ENCODE measurements at regions of chr10 and their contacts with region 1.

Region 1: DNA sequence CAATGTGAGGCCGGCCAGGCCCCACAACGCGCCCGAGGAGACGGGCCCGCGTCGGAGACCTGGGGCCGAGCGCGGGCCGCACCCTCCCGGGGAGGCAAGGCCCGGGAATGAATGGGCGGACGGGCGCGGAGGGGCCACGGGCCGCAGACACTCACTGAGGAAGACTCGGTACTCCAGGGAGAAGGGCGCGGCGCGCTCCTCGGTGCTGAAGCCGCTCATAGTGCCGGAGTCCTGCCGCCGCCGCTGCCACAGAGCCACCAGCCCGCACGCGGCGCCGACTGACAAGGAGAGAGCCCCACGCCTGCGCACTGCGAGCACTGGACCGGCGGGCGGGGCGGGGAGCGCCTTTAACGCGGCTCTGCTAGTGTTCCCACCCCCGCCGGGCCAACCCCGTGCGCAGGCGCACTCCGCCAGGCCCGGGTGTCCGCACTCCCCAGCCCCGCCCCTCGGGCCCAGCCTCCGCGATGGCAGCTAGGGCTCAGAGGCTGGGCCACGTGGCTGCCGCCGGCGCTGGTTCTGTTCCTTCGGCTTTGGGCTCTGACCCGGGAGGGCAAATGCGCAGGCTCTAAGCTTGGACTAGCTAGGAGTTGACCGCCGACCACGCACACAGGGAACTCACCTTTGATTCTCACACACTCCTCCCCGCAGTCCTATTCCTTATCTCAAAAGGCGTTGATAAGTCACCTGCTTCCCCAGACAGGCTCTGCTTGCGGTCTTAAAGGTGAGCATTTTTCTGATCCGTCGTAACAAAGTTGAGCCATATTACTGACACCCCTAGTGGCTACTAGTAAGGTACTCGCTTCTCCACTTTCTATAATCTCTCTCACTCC is at the start of gene PPA1:
- DNase-seq: peak; percentile 100
- ATAC-seq: peak; percentile 91
- H3K4me3 Mint-ChIP-seq: peak within 1 kb of the TSS; percentile 83
- H3K27ac Mint-ChIP-seq: peak within 1 kb of the TSS; percentile 89
- H3K4me1 Mint-ChIP-seq: peaks cover 31% of the 10 kb centered on the region
- H3K27me3 Mint-ChIP-seq: no peaks in the 10 kb centered on the region
- total RNA-seq, gene PPA1: 286 to 328 TPM

Region 2: DNA sequence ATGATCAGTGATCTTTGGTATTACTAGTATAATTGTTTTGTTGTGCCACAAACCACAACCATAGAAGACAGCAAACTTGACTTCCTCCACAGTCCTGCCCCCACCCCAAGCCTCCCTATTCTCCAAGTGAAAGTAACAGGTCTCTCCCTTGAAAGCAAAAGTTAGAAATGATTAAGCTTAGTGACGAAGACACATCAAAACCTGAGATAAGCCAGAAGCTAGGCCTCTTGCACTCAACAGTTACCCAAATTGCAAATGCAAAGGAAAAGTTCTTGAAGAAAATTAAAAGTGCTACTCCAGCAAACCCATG is 70.5 kb before region 1 on chr10:
- CTCF ChIA-PET with region 1: no interaction called
- POLR2A ChIA-PET with region 1: interaction called, 3 read pairs
- intact Hi-C with region 1: loop called in 1 of 2 experiments (anchors 1 kb)
- DNase-seq: peak; percentile 84
- ATAC-seq: peak; percentile 87
- H3K4me3 Mint-ChIP-seq: peak overlapping the region; percentile 60
- H3K27ac Mint-ChIP-seq: peak overlapping the region; percentile 90
- H3K4me1 Mint-ChIP-seq: peaks cover 74% of the 10 kb centered on the region
- H3K27me3 Mint-ChIP-seq: no peaks in the 10 kb centered on the region

Region 3: DNA sequence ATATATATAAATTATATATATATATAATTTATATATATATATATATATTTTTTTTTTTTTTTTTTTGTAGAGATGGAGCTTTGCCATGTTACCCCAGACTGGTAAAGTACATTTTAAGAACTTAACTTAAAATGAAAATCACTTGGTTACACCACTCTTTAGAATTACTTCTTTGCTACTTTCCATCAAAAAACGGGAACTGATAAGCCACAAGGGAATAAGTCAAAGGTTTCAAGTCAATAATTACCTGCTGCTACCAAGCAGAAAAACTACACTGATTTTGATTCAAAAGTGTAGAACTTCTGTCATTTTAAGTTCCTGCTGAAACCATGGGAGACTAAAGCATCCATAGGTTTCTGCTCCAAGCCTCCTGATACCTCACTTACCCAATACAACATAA is 12.3 kb before region 1 on chr10:
- CTCF ChIA-PET with region 1: interaction called, 69 read pairs
- POLR2A ChIA-PET with region 1: interaction called, 4 read pairs
- intact Hi-C with region 1: loop called in 1 of 2 experiments (anchors 1 kb)
- DNase-seq: no peak
- ATAC-seq: no peak
- H3K4me3 Mint-ChIP-seq: no peak overlapping the region
- H3K27ac Mint-ChIP-seq: no peak overlapping the region
- H3K4me1 Mint-ChIP-seq: peaks cover 36% of the 10 kb centered on the region
- H3K27me3 Mint-ChIP-seq: no peaks in the 10 kb centered on the region

Region 4: GRCh38 chr10:70272925-70273316 is 39.6 kb after region 1 on chr10:
- CTCF ChIA-PET with region 1: interaction called, 8 read pairs
- POLR2A ChIA-PET with region 1: interaction called, 7 read pairs
- intact Hi-C with region 1: loop called (anchors 1 to 2 kb)
- DNase-seq: peak; percentile 20
- ATAC-seq: peak; percentile 92
- H3K4me3 Mint-ChIP-seq: no peak overlapping the region
- H3K27ac Mint-ChIP-seq: no peak overlapping the region
- H3K4me1 Mint-ChIP-seq: peaks cover 23% of the 10 kb centered on the region
- H3K27me3 Mint-ChIP-seq: no peaks in the 10 kb centered on the region

Region 5: GRCh38 chr10:70404036-70404786 is 170.9 kb after region 1 on chr10 and contains the start of gene EIF4EBP2:
- CTCF ChIA-PET with region 1: interaction called, 3 read pairs
- POLR2A ChIA-PET with region 1: interaction called, 8 read pairs
- intact Hi-C with region 1: loop called (anchors 1 kb)
- DNase-seq: peak; percentile 99
- ATAC-seq: peak; percentile 91
- H3K4me3 Mint-ChIP-seq: peak within 1 kb of the TSS; percentile 94
- H3K27ac Mint-ChIP-seq: peak within 1 kb of the TSS; percentile 91
- H3K4me1 Mint-ChIP-seq: peaks cover 37% of the 10 kb centered on the region
- H3K27me3 Mint-ChIP-seq: no peaks in the 10 kb centered on the region
- total RNA-seq, gene EIF4EBP2: 24.4 to 27.7 TPM